ENCODE measurements at regions of chr2 and their contacts with region 1.

Region 1: GRCh38 chr2:31333527-31334183 is 80.9 kb downstream of the XDH start:
- DNase-seq: peak; percentile 82
- H3K4me3 ChIP-seq: no peak overlapping the region
- H3K27ac ChIP-seq: peak overlapping the region; percentile 93
- H3K4me1 ChIP-seq: peaks cover 48% of the 10 kb centered on the region
- H3K27me3 ChIP-seq: no peaks in the 10 kb centered on the region
- CTCF ChIP-seq: peak; percentile 98 to 99

Region 2: DNA sequence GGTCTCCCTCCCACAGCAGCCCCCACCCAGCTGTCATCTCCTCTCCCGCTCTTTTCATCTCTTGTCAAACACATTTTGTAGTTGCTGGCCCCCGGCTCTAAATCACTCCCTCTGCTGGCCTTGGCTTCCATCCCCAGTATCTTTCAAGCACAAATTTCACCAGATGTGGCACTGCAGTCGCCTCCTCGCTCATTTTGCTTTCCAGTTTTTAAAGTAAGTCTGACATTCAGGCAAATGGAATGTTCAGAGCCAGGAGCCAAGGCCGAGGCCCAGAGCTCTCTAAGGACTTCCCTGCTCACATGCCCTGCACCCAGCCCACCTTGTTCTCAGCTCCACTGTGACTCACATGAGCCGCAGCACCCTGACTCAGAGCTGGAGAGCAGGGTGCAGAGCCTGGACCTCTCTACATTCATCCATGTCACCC is 353.8 kb before region 1 on chr2:
- CTCF ChIA-PET with region 1: no interaction called
- dilution Hi-C with region 1: no loop called
- in situ Hi-C with region 1: no loop called
- intact Hi-C with region 1: loop called (anchors 5 kb)
- DNase-seq: peak; percentile 97
- H3K4me3 ChIP-seq: no peak overlapping the region
- H3K27ac ChIP-seq: peak overlapping the region; percentile 2
- H3K4me1 ChIP-seq: peaks cover 17% of the 10 kb centered on the region
- H3K27me3 ChIP-seq: no peaks in the 10 kb centered on the region
- CTCF ChIP-seq: peak; percentile 50 to 71

Region 3: DNA sequence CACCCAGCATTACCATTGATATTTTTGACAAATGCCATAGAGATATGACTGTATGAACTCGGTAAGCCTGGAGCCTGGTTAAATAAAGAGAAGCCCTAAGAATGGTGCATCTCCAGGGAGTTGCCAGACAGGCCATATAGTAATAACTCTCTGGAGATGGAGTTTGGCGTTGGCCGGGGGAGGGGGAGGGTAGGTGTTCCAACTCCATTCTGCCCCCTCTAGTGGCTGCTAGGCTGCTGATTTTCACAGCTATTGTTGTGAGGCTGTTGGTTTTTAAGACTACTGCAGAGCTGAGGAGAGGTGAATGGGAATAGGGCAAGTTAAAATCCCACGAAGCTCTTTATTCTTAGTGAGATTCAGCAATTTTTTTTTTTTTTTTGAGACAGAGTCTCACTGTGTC is 295.3 kb before region 1 on chr2:
- CTCF ChIA-PET with region 1: no interaction called
- dilution Hi-C with region 1: no loop called
- in situ Hi-C with region 1: no loop called
- intact Hi-C with region 1: no loop called
- DNase-seq: no peak
- H3K4me3 ChIP-seq: no peak overlapping the region
- H3K27ac ChIP-seq: no peak overlapping the region
- H3K4me1 ChIP-seq: peaks cover 6% of the 10 kb centered on the region
- H3K27me3 ChIP-seq: no peaks in the 10 kb centered on the region
- CTCF ChIP-seq: no peak

Region 4: GRCh38 chr2:31151501-31151900 is 182.2 kb before region 1 on chr2:
- CTCF ChIA-PET with region 1: no interaction called
- dilution Hi-C with region 1: no loop called
- in situ Hi-C with region 1: no loop called
- intact Hi-C with region 1: loop called (anchors 5 kb)
- DNase-seq: no peak
- H3K4me3 ChIP-seq: no peak overlapping the region
- H3K27ac ChIP-seq: no peak overlapping the region
- H3K4me1 ChIP-seq: no peaks in the 10 kb centered on the region
- H3K27me3 ChIP-seq: peaks cover 4% of the 10 kb centered on the region
- CTCF ChIP-seq: no peak

Region 5: DNA sequence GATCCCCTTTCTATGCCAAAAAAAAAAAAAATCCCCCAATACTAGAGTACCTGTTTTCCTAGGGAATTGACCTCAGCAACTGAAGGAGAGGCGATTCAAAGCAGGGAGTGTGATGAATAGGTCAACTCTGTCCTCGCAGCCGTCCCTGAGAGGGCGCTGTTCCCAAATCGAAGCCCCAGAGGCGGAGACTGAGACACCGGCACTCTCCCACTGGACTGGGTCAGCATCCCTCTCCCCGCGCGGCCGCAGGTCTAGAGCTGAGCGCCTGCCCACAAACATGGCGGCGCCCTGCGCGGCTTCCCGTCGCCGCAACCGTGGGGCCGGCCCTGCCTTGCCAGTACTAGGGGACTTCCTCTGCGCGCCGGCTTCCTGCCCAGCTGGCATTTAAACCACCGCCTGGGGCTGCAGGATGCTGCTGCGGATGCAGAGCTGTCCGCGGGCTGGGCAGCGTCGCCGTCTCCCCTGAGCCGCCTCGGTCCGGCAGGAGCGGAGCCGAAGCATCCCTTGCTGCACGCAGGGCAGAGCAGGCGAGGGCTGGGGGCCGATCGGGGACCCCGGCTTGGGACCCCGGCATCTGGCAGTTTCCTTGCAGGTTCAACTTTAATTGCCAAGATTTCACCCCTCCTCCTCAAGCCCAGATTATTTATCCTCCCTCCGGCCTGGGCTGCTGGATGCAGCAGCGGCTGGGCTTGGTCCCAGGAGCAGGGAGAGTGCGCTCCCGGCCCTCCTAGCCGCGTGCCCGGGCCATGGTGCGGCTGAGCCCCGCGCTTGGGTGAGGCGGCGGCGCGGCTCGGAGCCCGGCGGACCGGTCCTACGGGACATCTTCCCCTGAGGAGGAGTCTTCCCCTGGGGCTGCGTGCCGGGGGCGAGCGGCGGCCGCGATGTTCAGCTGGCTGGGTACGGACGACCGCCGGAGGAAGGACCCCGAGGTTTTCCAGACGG is 99.6 kb before region 1 on chr2 and contains the start of gene EHD3:
- CTCF ChIA-PET with region 1: interaction called, 5 read pairs
- dilution Hi-C with region 1: no loop called
- in situ Hi-C with region 1: loop called in 1 of 2 experiments (anchors 10 kb)
- intact Hi-C with region 1: loop called (anchors 1 kb)
- DNase-seq: peak; percentile 85
- H3K4me3 ChIP-seq: peak within 1 kb of the TSS; percentile 48 to 69 (median 49)
- H3K27ac ChIP-seq: no peak within 1 kb of the TSS
- H3K4me1 ChIP-seq: peaks cover 27% of the 10 kb centered on the region
- H3K27me3 ChIP-seq: no peaks in the 10 kb centered on the region
- CTCF ChIP-seq: peak; percentile 64 to 86
- total RNA-seq, gene EHD3: 39.4 to 53.3 TPM

Region 6: DNA sequence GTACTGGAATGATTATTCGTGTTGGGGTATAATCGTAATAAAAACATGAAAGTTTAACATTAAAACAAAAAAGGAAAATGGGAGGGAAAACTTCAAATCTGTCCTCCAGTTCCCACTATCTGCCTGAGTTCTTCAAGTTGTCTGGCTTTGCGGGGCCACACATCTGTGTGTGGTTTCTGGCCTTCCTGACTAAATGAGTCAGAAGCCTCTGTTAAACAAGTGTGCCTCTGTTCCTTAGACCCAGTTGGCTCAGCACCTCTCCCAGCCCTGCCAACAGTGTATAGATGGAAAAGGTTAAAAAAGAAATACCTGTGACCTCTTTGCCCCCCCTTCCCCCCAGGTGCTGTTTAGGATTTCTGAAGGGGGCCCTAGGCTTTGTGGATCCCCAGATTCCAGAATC is 50.7 kb after region 1 on chr2:
- CTCF ChIA-PET with region 1: no interaction called
- dilution Hi-C with region 1: no loop called
- in situ Hi-C with region 1: loop called in 1 of 2 experiments (anchors 5 kb)
- intact Hi-C with region 1: loop called (anchors 1 kb)
- DNase-seq: peak; percentile 95
- H3K4me3 ChIP-seq: no peak overlapping the region
- H3K27ac ChIP-seq: peak overlapping the region; percentile 99
- H3K4me1 ChIP-seq: peaks cover 49% of the 10 kb centered on the region
- H3K27me3 ChIP-seq: no peaks in the 10 kb centered on the region
- CTCF ChIP-seq: no peak

Region 7: GRCh38 chr2:31434911-31435310 is 101.3 kb after region 1 on chr2:
- CTCF ChIA-PET with region 1: no interaction called
- dilution Hi-C with region 1: no loop called
- in situ Hi-C with region 1: loop called in 1 of 2 experiments (anchors 5 kb)
- intact Hi-C with region 1: loop called (anchors 1 kb)
- DNase-seq: peak; percentile 44
- H3K4me3 ChIP-seq: no peak overlapping the region
- H3K27ac ChIP-seq: no peak overlapping the region
- H3K4me1 ChIP-seq: peaks cover 19% of the 10 kb centered on the region
- H3K27me3 ChIP-seq: no peaks in the 10 kb centered on the region
- CTCF ChIP-seq: peak; percentile 59 to 73

Region 8: DNA sequence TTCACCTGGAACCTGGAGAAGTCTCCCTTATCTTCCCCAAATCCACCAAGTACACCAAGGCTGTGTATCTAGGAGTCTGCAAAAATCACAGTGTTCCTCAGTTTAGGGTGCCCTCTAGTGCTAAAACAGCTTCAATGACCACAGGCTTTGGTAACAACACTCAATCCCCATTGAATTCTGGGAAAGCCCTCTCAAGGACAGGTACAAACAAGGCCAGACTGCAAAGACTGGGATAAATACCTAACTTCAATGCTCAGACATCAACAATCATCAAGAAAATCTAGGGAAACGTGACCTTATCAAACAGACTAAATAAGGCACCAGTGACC is 396.1 kb after region 1 on chr2:
- CTCF ChIA-PET with region 1: no interaction called
- dilution Hi-C with region 1: no loop called
- in situ Hi-C with region 1: loop called in 1 of 2 experiments (anchors 25 kb)
- intact Hi-C with region 1: no loop called
- DNase-seq: peak; percentile 66
- H3K4me3 ChIP-seq: no peak overlapping the region
- H3K27ac ChIP-seq: no peak overlapping the region
- H3K4me1 ChIP-seq: no peaks in the 10 kb centered on the region
- H3K27me3 ChIP-seq: no peaks in the 10 kb centered on the region
- CTCF ChIP-seq: peak; percentile 65 to 81

Region 9: GRCh38 chr2:31997653-31998052 is 664.0 kb after region 1 on chr2:
- CTCF ChIA-PET with region 1: no interaction called
- dilution Hi-C with region 1: no loop called
- in situ Hi-C with region 1: no loop called
- intact Hi-C with region 1: no loop called
- DNase-seq: no peak
- H3K4me3 ChIP-seq: no peak overlapping the region
- H3K27ac ChIP-seq: no peak overlapping the region
- H3K4me1 ChIP-seq: peaks cover 3% of the 10 kb centered on the region
- H3K27me3 ChIP-seq: no peaks in the 10 kb centered on the region
- CTCF ChIP-seq: no peak

Measured in mammary epithelial cell (primary cell).